ENCODE measurements at regions of chr15 and their contacts with region 1.

Region 1: DNA sequence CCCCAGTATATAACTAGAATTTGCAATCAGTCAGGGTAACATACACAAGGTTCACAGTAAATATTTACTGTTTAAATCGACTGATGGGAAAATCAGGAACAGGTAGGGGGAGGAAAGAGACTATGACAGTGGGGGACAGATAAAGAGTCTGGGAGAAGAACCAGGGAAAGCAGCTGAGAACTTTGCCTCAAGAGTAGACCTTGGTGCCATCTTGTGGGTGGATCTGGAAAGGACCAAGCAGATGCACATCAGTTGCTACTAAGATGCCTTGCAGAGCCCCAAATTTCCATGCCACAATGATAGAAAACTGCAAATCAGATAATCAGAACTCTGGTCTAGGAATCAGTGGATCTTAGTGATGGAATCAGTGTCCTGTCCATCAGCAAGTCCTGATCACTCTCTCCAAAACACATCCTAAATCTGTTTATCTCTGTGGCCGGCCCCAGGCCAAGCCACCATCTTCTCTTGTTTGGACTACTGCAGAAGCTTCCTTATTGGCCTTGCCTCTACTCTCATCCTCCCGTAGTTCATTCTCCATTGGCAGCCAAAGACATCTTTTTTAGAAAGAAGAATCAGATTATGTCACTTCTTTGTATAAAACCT is 62.7 kb downstream of the PDE8A start:
- DNase-seq: peak; percentile 57
- H3K4me3 Mint-ChIP-seq: no peak overlapping the region
- H3K27ac Mint-ChIP-seq: no peak overlapping the region
- H3K4me1 Mint-ChIP-seq: peaks cover 23% of the 10 kb centered on the region
- H3K27me3 Mint-ChIP-seq: no peaks in the 10 kb centered on the region

Region 2: DNA sequence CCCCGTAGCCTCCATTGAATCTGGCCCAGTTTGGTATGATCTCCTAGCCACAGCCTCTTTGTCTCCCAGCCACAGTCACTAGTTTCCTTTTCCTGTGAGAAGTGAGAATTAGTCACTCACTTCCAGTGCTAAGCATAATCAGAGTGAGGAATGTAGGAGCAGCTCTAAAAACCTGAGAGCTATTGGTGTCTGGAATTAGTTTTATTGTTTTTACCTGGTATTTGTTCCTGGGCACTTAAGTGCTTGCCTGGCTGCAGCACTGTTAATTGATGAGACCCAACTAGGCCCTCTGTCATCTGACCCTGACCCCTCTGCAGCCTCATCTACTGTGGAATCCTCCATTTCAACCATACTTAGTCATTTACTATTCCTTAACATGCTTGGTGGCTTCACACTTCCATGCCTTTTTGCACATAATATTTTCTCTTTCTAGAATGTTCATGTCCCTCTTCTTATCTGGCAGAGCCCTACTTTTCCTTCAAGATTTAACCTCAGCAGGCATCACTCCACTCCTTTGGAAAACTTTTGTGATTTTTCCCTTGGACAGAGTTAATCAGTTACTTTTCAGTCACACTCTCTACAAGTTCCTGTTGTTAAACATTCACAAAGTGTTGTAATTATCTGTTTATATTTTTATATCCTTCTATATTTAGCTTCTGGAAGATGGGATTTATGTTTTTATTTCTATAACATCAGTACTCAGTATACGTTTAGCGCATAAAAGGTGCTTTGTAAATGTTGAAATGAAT is 13.9 kb before region 1 on chr15:
- CTCF ChIA-PET with region 1: interaction called, 10 read pairs
- POLR2A ChIA-PET with region 1: no interaction called
- DNase-seq: no peak
- H3K4me3 Mint-ChIP-seq: no peak overlapping the region
- H3K27ac Mint-ChIP-seq: peak overlapping the region; percentile 37
- H3K4me1 Mint-ChIP-seq: peaks cover 47% of the 10 kb centered on the region
- H3K27me3 Mint-ChIP-seq: no peaks in the 10 kb centered on the region